ENCODE measurements at regions of chr11 and their contacts with region 1.

Region 1: DNA sequence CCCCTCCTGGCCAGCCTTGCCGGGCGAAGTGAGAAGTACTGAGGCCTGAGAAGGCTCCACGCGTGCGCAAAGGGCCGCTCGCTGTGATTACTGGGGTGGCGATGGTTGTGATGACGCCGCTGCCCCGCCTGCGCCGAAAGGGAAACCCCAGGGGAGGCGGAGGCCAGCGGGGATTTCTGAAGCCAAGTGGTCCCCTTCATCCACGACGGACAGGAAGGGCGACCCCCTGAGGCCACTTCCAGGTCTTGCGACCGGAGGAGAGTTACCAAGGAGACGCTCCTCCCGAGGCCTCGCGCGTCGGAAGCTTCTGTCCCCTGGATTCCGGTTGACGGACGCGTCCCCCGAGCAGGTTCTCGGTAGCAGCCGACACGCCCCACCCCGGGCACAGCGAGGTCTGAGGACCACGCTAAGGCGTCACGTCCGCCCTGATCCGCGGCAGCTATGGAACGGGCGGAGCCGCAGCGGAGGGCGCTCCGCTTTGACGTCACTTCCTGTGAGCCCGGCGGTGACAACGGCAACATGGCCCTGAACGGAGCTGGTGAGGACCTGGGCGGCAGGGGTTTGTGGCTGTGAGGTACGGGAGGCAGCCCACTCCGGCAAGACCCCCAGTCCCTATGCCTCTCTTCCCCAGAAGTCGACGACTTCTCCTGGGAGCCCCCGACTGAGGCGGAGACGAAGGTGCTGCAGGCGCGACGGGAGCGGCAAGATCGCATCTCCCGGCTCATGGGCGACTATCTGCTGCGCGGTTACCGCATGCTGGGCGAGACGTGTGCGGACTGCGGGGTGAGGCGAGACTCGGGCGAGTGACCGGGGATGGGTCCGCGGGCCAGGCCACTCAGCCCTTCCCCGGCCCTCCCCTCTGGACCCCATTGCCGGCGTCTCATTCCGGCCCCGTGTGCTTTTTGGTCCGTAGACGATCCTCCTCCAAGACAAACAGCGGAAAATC is at the start of gene ZNRD2:
- DNase-seq: peak; percentile 95 to 96
- H3K4me3 ChIP-seq: peak within 1 kb of the TSS; percentile 67 to 97 (median 92)
- H3K27ac ChIP-seq: peak within 1 kb of the TSS; percentile 33; the same call in 1 of the 2 replicates
- H3K4me1 ChIP-seq: peaks cover 10 to 29% (median 18%) of the 10 kb centered on the region in 4 experiments
- H3K27me3 ChIP-seq: peaks cover 0 to 11% (median 6%) of the 10 kb centered on the region in 4 experiments; a peak in 6 of 7 replicates
- CTCF ChIP-seq: peak in 2 of 3 experiments; percentile 66 to 84; a peak in 3 of 4 replicates
- EP300 ChIP-seq: no peak
- POLR2A ChIP-seq: peak in 1 of 2 experiments; percentile 80; a peak in 2 of 3 replicates
- RAD21 ChIP-seq: peak; percentile 44 to 50; a peak in 3 of 4 replicates
- total RNA-seq, gene ZNRD2: 53.4 and 56.1 TPM in 2 replicates

Region 2: GRCh38 chr11:65321828-65322485 is 248.3 kb before region 1 on chr11:
- CTCF ChIA-PET with region 1: no interaction called
- POLR2A ChIA-PET with region 1: no interaction called
- DNase-seq: no peak
- H3K4me3 ChIP-seq: no peak overlapping the region
- H3K27ac ChIP-seq: no peak overlapping the region
- H3K4me1 ChIP-seq: peaks cover 0 to 5% (median 2%) of the 10 kb centered on the region in 4 experiments; a peak in 3 of 7 replicates
- H3K27me3 ChIP-seq: no peaks in the 10 kb centered on the region
- CTCF ChIP-seq: no peak
- EP300 ChIP-seq: no peak
- POLR2A ChIP-seq: no peak
- RAD21 ChIP-seq: no peak

Region 3: GRCh38 chr11:65452806-65453490 is 117.3 kb before region 1 on chr11:
- CTCF ChIA-PET with region 1: no interaction called
- POLR2A ChIA-PET with region 1: no interaction called
- DNase-seq: no peak
- H3K4me3 ChIP-seq: no peak overlapping the region
- H3K27ac ChIP-seq: no peak overlapping the region
- H3K4me1 ChIP-seq: peaks cover 0 to 6% (median 1%) of the 10 kb centered on the region in 4 experiments; a peak in 5 of 7 replicates
- H3K27me3 ChIP-seq: peaks cover 13 to 40% (median 35%) of the 10 kb centered on the region in 4 experiments
- CTCF ChIP-seq: no peak
- EP300 ChIP-seq: no peak
- POLR2A ChIP-seq: no peak
- RAD21 ChIP-seq: no peak

Region 4: DNA sequence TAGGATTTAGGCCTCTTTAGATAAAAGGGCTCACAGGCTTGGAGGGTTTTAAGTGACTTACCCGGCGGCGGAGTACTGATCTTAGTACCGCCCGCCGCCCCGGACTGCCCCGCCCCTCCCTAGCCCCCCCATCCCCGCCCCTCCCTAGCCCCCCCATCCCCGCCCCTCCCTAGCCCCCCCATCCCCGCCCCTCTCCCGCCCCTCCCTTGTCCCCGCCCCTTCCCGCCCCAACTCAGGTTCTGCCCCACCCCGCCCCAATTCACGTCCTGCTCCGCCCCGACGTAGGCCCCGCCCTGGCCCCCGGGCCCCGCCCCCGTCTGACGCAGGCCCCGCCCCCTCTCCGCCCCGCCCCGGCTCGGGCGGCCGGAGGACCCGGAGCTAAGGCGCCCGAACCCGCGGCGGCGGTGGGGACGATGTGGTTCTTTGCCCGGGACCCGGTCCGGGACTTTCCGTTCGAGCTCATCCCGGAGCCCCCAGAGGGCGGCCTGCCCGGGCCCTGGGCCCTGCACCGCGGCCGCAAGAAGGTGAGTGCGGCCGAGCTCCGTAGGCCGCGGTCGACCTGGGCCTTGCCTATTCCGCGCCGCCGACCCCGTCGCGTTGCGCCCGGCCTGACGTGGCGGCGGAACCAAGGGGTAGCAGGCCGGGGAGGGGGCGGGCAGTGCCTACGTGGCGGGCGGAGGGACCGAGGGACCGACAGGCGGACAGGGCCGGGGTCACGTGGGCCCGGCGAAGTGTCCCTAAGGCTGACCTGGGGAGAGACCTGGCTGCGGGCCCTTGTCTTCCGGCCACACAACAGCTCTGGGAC is 45.3 kb before region 1 on chr11 and contains the start of gene SCYL1:
- CTCF ChIA-PET with region 1: interaction called, 31 read pairs
- POLR2A ChIA-PET with region 1: interaction called, 6 read pairs
- DNase-seq: peak in 1 of 2 experiments; percentile 88
- H3K4me3 ChIP-seq: peak within 1 kb of the TSS; percentile 60 to 98 (median 82)
- H3K27ac ChIP-seq: no peak within 1 kb of the TSS
- H3K4me1 ChIP-seq: peaks cover 0 to 14% (median 8%) of the 10 kb centered on the region in 4 experiments; a peak in 5 of 7 replicates
- H3K27me3 ChIP-seq: peaks cover 0 to 4% (median 0%) of the 10 kb centered on the region in 4 experiments; a peak in 2 of 7 replicates
- CTCF ChIP-seq: no peak
- EP300 ChIP-seq: no peak
- POLR2A ChIP-seq: peak in 1 of 2 experiments; percentile 53; a peak in 2 of 3 replicates
- RAD21 ChIP-seq: no peak
- total RNA-seq, gene SCYL1: 59.4 and 59.8 TPM in 2 replicates

Region 5: GRCh38 chr11:65530157-65530496 is 40.1 kb before region 1 on chr11:
- CTCF ChIA-PET with region 1: interaction called, 31 read pairs
- POLR2A ChIA-PET with region 1: interaction called, 6 read pairs
- DNase-seq: no peak
- H3K4me3 ChIP-seq: no peak overlapping the region
- H3K27ac ChIP-seq: no peak overlapping the region
- H3K4me1 ChIP-seq: peaks cover 0 to 7% (median 5%) of the 10 kb centered on the region in 4 experiments; a peak in 5 of 7 replicates
- H3K27me3 ChIP-seq: no peaks in the 10 kb centered on the region
- CTCF ChIP-seq: peak in 2 of 3 experiments; percentile 49 to 71; a peak in 2 of 4 replicates
- EP300 ChIP-seq: no peak
- POLR2A ChIP-seq: no peak
- RAD21 ChIP-seq: peak; percentile 5 to 46; a peak in 2 of 4 replicates

Region 6: DNA sequence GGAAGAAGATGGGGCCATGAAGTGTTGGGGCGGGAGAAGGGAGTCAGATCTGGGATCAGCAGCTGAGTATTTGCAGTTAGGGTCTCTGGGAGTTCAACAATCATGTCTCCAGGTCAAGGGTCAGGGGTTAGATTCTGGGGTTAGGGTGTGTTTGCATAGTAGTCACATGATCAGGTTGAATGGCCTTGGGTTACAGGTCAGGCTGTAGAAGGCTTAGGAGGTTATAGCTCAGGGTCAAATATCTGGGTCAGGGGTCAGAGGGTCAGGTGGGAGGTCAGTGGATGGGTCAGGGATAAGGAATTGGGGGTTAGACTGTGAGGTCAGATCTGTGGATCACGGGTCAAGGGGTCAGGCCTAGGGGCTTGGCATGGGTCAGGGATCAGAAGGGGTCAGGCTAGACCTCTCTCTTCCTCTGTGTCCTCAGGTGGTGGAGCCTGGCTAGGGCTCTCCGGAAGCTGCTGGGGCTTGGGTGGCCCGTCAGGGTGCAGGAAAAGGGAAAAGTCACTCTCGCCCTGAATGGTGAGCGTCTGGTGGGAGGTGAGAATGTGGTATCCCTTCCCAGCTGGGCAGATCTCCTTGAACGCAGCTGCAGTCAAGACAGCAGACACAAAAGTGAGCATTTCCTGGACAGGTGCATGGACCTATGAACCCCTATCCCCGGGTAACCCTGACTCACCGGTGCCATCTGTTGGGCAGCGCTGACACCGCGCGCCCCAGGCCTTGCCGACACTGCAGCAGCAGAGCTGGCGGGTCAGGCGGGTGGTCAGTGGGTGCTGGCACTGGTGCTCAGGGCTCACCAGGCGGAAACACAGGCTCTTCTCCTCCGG is 18.5 kb before region 1 on chr11:
- CTCF ChIA-PET with region 1: interaction called, 284 read pairs
- POLR2A ChIA-PET with region 1: interaction called, 10 read pairs
- DNase-seq: peak in 1 of 2 experiments; percentile 92
- H3K4me3 ChIP-seq: no peak overlapping the region
- H3K27ac ChIP-seq: no peak overlapping the region
- H3K4me1 ChIP-seq: peaks cover 0 to 36% (median 27%) of the 10 kb centered on the region in 4 experiments; a peak in 6 of 7 replicates
- H3K27me3 ChIP-seq: peaks cover 2 to 39% (median 26%) of the 10 kb centered on the region in 4 experiments; a peak in 6 of 7 replicates
- CTCF ChIP-seq: peak in 2 of 3 experiments; percentile 74 to 84; a peak in 3 of 4 replicates
- EP300 ChIP-seq: no peak
- POLR2A ChIP-seq: no peak
- RAD21 ChIP-seq: peak; percentile 36 to 58

Region 7: DNA sequence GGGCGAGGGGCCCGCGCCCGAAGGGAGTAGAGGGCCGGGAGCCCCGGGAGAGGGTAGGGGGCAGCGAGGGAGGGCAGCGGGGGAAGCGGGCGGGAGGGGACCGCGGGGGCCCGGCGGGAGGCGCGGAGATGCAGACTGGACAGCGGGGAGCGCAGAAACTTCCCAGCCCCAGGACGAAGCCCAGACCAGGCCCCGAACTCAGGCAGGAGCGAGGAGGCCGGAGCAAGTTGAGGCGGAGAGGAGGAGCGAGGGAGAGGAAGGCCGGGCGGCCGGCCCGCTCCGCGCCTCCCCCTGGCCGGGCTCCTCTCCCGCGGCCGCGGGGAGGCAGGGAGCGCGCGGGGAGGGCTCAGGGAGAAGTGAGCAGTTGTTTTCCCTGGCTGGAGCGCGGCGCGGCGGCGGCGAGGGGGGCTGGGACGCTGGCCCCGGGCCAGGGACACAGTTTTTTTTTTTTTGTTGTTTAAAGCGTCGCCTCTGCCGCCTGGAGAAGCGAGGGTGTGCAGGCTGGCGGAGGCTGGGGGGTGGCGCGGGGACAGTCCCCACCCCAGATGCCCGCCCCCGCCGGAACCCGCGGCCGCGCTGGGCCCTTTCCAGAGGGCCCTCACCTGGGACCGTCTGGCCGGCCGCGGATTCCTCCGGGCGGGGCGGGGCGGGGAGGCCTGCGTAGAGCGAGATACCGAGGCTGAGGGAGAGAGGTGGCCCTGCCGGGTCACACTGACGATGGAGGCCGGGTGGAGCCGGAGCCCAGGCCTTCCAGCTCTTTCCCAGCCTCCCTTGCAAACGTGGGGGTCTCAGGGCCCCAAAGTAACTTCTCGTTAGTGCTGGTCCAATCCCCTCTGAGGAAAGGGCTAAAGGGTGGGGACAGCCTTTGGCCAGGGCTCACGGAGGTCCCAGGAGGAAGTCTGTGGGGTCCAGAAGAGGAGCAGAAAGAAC is 12.0 kb before region 1 on chr11 and contains the start of gene LTBP3:
- CTCF ChIA-PET with region 1: interaction called, 70 read pairs
- POLR2A ChIA-PET with region 1: interaction called, 14 read pairs
- DNase-seq: peak in 1 of 2 experiments; percentile 72
- H3K4me3 ChIP-seq: peak within 1 kb of the TSS; percentile 39 to 77 (median 48)
- H3K27ac ChIP-seq: no peak within 1 kb of the TSS
- H3K4me1 ChIP-seq: peaks cover 0 to 51% (median 39%) of the 10 kb centered on the region in 4 experiments; a peak in 6 of 7 replicates
- H3K27me3 ChIP-seq: peaks cover 0 to 32% (median 21%) of the 10 kb centered on the region in 4 experiments; a peak in 5 of 7 replicates
- CTCF ChIP-seq: no peak
- EP300 ChIP-seq: no peak
- POLR2A ChIP-seq: no peak
- RAD21 ChIP-seq: no peak
- total RNA-seq, gene LTBP3: 12.8 and 15.3 TPM in 2 replicates